CD8-positive, alpha-beta memory T cell (primary cell): ENCODE measurements at regions of chr15 and their contacts with region 1.

Region 1: DNA sequence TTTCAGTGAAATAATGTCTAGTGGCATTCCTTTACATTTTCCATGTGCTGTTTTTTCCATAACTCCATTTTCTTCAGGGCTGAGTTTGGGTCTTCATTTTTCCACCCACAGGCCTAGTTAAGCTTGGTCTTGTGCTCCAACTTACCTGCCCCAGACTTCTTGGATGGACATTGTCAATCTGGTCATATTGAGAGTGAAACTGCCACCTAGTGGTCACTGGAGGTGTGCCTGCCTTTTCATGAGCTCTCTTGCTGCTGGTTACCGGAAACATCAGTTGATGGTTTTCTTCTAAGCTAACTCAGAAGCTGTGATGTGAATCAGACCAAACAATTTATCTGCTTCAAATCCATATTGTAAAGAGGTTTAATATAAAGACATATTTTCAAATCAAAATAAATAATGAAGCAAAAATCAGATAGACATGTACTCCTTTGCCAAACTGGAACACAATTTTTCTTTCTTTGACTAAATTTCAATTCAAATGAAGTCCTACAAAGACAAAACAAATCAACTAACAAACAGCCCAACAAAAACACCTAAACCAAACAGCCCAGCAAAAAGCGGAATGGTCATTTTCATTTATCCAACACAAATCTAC is 135.1 kb upstream of the RASGRP1 start:
- DNase-seq: peak; percentile 39 to 76 (median 59)
- H3K4me3 ChIP-seq: no peak overlapping the region
- H3K4me3 Mint-ChIP-seq: peak overlapping the region in 5 of 7 donors; percentile 3 to 37 (median 30)
- H3K27ac ChIP-seq: no peak overlapping the region
- H3K27ac Mint-ChIP-seq: peak overlapping the region; percentile 64 to 91 (median 80)
- H3K4me1 ChIP-seq: peaks cover 52% of the 10 kb centered on the region
- H3K4me1 Mint-ChIP-seq: peaks cover 53 to 57% (median 56%) of the 10 kb centered on the region in 3 donors
- H3K27me3 ChIP-seq: no peaks in the 10 kb centered on the region
- H3K27me3 Mint-ChIP-seq: peaks cover 0 to 3% of the 10 kb centered on the region in 2 donors

Region 2: GRCh38 chr15:38440353-38441129 is 259.2 kb before region 1 on chr15:
- CTCF ChIA-PET with region 1: interaction called, 82 read pairs
- POLR2A ChIA-PET with region 1: interaction called, 5 read pairs
- DNase-seq: peak in 4 of 5 donors; percentile 28 to 64 (median 54)
- H3K4me3 ChIP-seq: no peak overlapping the region
- H3K4me3 Mint-ChIP-seq: no peak overlapping the region
- H3K27ac ChIP-seq: no peak overlapping the region
- H3K27ac Mint-ChIP-seq: peak overlapping the region in 2 of 8 donors; percentile 12 to 56
- H3K4me1 ChIP-seq: no peaks in the 10 kb centered on the region
- H3K4me1 Mint-ChIP-seq: peaks cover 4 to 6% (median 4%) of the 10 kb centered on the region in 3 donors
- H3K27me3 ChIP-seq: no peaks in the 10 kb centered on the region
- H3K27me3 Mint-ChIP-seq: peaks cover 16 to 37% of the 10 kb centered on the region in 2 donors

Region 3: GRCh38 chr15:38474155-38474757 is 225.5 kb before region 1 on chr15:
- CTCF ChIA-PET with region 1: interaction called, 17 read pairs
- POLR2A ChIA-PET with region 1: no interaction called
- DNase-seq: peak in 4 of 5 donors; percentile 12 to 64 (median 62)
- H3K4me3 ChIP-seq: no peak overlapping the region
- H3K4me3 Mint-ChIP-seq: no peak overlapping the region
- H3K27ac ChIP-seq: no peak overlapping the region
- H3K27ac Mint-ChIP-seq: peak overlapping the region in 7 of 8 donors; percentile 6 to 89 (median 76)
- H3K4me1 ChIP-seq: peaks cover 7% of the 10 kb centered on the region
- H3K4me1 Mint-ChIP-seq: peaks cover 7 to 8% (median 8%) of the 10 kb centered on the region in 3 donors
- H3K27me3 ChIP-seq: no peaks in the 10 kb centered on the region
- H3K27me3 Mint-ChIP-seq: no peaks in the 10 kb centered on the region

Region 4: DNA sequence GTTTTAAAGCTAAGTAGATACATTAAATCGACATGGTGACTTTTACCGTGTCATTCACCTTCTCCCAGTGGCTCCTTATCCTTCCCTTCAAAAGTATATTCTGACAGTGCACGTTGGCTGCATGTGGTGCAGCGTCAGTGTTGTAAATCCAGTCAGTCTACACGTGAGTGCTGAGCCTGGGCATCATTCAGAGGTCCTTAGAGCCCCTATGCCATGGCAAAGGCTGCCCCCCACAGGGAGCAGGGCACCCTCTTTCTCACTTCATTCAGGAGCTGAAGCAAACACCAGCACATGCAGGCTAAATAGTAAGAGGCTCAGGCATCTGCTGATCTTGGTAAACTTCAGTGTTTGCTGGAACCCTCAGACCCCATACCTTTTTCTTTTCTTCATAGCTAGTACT is 178.4 kb before region 1 on chr15:
- CTCF ChIA-PET with region 1: interaction called, 12 read pairs
- POLR2A ChIA-PET with region 1: interaction called, 3 read pairs
- DNase-seq: no peak
- H3K4me3 ChIP-seq: no peak overlapping the region
- H3K4me3 Mint-ChIP-seq: peak overlapping the region in 1 of 7 donors; percentile 27
- H3K27ac ChIP-seq: no peak overlapping the region
- H3K27ac Mint-ChIP-seq: peak overlapping the region in 7 of 8 donors; percentile 28 to 93 (median 62)
- H3K4me1 ChIP-seq: peaks cover 1% of the 10 kb centered on the region
- H3K4me1 Mint-ChIP-seq: peaks cover 45 to 73% (median 63%) of the 10 kb centered on the region in 3 donors
- H3K27me3 ChIP-seq: no peaks in the 10 kb centered on the region
- H3K27me3 Mint-ChIP-seq: no peaks in the 10 kb centered on the region

Region 5: GRCh38 chr15:38683382-38684242 is 16.1 kb before region 1 on chr15:
- CTCF ChIA-PET with region 1: interaction called, 116 read pairs
- POLR2A ChIA-PET with region 1: interaction called, 4 read pairs
- DNase-seq: peak; percentile 49 to 80 (median 67)
- H3K4me3 ChIP-seq: no peak overlapping the region
- H3K4me3 Mint-ChIP-seq: peak overlapping the region; percentile 5 to 71 (median 40)
- H3K27ac ChIP-seq: no peak overlapping the region
- H3K27ac Mint-ChIP-seq: peak overlapping the region; percentile 12 to 97 (median 91)
- H3K4me1 ChIP-seq: peaks cover 64% of the 10 kb centered on the region
- H3K4me1 Mint-ChIP-seq: peaks cover 66 to 74% (median 71%) of the 10 kb centered on the region in 3 donors
- H3K27me3 ChIP-seq: no peaks in the 10 kb centered on the region
- H3K27me3 Mint-ChIP-seq: no peaks in the 10 kb centered on the region

Region 6: DNA sequence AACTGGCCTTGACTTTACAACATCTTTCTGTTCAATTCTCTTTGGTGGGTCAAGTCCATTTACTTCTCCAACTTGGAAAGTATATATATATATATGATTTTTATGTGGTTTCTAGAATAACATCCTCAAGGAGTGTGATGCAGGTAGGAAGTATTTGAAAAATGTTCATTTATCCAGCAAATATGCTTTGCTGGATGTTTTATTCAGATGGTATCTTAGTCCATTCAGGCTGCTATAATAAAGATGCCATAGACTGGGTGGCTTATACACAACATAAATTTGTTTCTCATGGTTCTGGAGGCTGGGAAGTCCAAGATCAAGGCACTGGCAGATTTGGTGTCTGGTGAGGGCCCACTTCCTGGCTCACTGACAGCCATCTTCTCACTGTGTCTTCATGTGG is 33.6 kb after region 1 on chr15:
- CTCF ChIA-PET with region 1: no interaction called
- POLR2A ChIA-PET with region 1: no interaction called
- DNase-seq: no peak
- H3K4me3 ChIP-seq: no peak overlapping the region
- H3K4me3 Mint-ChIP-seq: no peak overlapping the region
- H3K27ac ChIP-seq: no peak overlapping the region
- H3K27ac Mint-ChIP-seq: no peak overlapping the region
- H3K4me1 ChIP-seq: no peaks in the 10 kb centered on the region
- H3K4me1 Mint-ChIP-seq: no peaks in the 10 kb centered on the region
- H3K27me3 ChIP-seq: peaks cover 4% of the 10 kb centered on the region
- H3K27me3 Mint-ChIP-seq: peaks cover 7 to 22% of the 10 kb centered on the region in 2 donors

Region 7: DNA sequence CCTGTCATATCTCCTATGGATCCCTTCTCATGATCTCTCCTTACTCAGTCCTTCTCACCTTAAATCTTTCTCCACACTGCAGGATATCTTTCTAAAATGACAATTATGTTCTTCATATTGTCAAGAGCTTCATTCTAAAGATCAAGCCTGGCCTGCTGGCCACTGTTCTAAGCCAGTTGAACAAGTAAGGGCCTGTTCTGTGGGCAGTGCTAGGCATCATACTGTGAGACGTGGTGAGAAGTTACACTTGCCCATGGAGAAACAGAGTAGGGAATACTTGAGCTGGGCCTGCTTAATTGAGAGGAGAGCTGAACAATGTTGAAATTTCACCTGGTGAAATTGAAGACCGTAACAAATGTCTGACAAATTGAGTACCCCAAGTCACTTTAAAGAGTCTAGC is 49.0 kb after region 1 on chr15:
- CTCF ChIA-PET with region 1: no interaction called
- POLR2A ChIA-PET with region 1: no interaction called
- DNase-seq: no peak
- H3K4me3 ChIP-seq: no peak overlapping the region
- H3K4me3 Mint-ChIP-seq: no peak overlapping the region
- H3K27ac ChIP-seq: no peak overlapping the region
- H3K27ac Mint-ChIP-seq: no peak overlapping the region
- H3K4me1 ChIP-seq: no peaks in the 10 kb centered on the region
- H3K4me1 Mint-ChIP-seq: no peaks in the 10 kb centered on the region
- H3K27me3 ChIP-seq: no peaks in the 10 kb centered on the region
- H3K27me3 Mint-ChIP-seq: peaks cover 5 to 23% of the 10 kb centered on the region in 2 donors